ENCODE measurements at regions of chr5 and their contacts with region 1.

Region 1: DNA sequence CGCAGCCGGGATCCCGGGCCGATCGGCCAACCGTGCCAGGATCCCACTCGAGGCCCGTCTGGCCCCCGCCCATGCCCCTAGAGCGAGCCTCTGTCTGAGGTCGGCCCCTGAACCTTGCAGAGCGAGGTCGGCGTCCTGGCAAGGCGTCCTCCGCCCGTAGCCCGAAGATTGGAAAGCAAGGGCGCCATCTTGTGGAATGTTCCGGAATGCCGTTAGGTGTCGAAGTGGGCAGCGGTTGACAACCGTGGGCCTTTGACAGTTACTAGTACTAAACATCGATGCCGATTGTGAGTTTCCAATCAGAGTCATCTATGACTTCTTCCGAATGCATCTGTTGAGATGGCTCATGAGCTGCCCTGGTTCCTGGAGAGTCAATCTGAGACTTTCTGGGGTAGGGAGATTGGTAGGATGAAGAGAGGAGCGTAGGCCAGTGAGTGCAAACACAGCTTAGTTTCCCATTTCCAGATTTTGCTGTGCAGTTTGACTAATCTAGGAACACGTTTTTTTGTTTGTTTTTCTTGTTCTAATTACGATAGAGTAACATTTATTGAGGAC is 923 bp upstream of the PLK2 start:
- DNase-seq: peak; percentile 77
- ATAC-seq: peak; percentile 71
- H3K4me3 ChIP-seq: peak overlapping the region; percentile 82
- H3K27ac ChIP-seq: peak overlapping the region; percentile 92
- H3K4me1 ChIP-seq: peaks cover 8 to 45% of the 10 kb centered on the region in 2 experiments
- H3K27me3 ChIP-seq: no peaks in the 10 kb centered on the region
- CTCF ChIP-seq: peak; percentile 63 to 81 (median 77)
- POLR2A ChIP-seq: no peak
- RAD21 ChIP-seq: peak; percentile 91

Region 2: GRCh38 chr5:57383093-57383861 is 1077.5 kb before region 1 on chr5:
- CTCF ChIA-PET with region 1: no interaction called
- POLR2A ChIA-PET with region 1: no interaction called
- RAD21 ChIA-PET with region 1: no interaction called
- intact Hi-C with region 1: loop called (anchors 5 kb)
- DNase-seq: peak; percentile 92
- ATAC-seq: peak; percentile 96
- H3K4me3 ChIP-seq: peak overlapping the region in 1 of 2 experiments; percentile 17; a peak in 1 of 4 replicates
- H3K27ac ChIP-seq: peak overlapping the region; percentile 95
- H3K4me1 ChIP-seq: peaks cover 27 to 37% of the 10 kb centered on the region in 2 experiments
- H3K27me3 ChIP-seq: no peaks in the 10 kb centered on the region
- CTCF ChIP-seq: 0 out of 6 replicates have a peak, but pooled peaks of 1 of the 3 experiments have one; percentile 17
- POLR2A ChIP-seq: no peak
- RAD21 ChIP-seq: peak; percentile 50

Region 3: GRCh38 chr5:57499262-57500050 is 961.4 kb before region 1 on chr5:
- CTCF ChIA-PET with region 1: interaction called, 50 read pairs
- POLR2A ChIA-PET with region 1: interaction called, 5 read pairs
- RAD21 ChIA-PET with region 1: interaction called, 3 to 8 read pairs
- intact Hi-C with region 1: loop called (anchors 1 kb)
- DNase-seq: peak; percentile 62
- ATAC-seq: peak; percentile 33
- H3K4me3 ChIP-seq: no peak overlapping the region
- H3K27ac ChIP-seq: no peak overlapping the region
- H3K4me1 ChIP-seq: peaks cover 22 to 43% of the 10 kb centered on the region in 2 experiments
- H3K27me3 ChIP-seq: no peaks in the 10 kb centered on the region
- CTCF ChIP-seq: peak; percentile 61 to 85 (median 63); a peak in 5 of 6 replicates
- POLR2A ChIP-seq: no peak
- RAD21 ChIP-seq: peak; percentile 93

Region 4: DNA sequence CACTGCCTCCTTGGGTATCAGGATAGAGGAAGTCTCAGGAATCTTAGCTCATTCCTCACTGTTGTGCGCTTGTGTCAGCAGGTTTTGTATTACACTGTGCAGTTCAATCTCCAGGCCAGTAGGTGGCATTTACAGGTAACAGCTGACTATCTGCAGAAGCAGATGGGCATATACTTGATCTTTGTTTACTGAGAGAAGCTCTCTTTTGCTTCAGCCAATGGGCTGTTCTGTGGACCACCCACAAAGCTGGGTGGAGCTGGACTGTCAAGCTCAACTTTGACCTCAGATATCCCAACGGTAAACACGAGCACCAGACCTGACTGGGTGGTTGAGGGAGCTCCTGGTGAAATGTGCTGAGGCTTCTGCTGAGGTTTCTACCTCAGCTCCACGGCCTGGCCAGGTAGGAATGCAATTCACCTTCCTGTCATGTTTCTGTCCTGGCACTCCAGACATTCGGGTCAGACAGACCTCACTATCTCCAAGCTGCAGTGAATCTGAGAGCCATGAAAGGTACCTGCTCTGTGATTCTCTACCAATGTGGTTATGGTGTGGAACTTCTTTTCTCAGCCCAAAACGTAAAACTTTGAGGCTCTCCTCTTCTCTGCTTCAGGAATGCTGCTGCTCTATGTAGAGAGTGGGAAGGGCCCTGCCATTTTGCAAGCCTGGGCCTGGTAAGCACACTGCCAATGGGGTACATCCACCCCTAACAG is 810.3 kb before region 1 on chr5:
- CTCF ChIA-PET with region 1: interaction called, 7 read pairs
- POLR2A ChIA-PET with region 1: interaction called, 3 read pairs
- RAD21 ChIA-PET with region 1: interaction called in 1 of 2 experiments, 3 read pairs
- intact Hi-C with region 1: loop called (anchors 1 kb)
- DNase-seq: peak; percentile 57
- ATAC-seq: peak; percentile 97
- H3K4me3 ChIP-seq: no peak overlapping the region
- H3K27ac ChIP-seq: no peak overlapping the region
- H3K4me1 ChIP-seq: peaks cover 0 to 10% of the 10 kb centered on the region in 2 experiments; a peak in 2 of 4 replicates
- H3K27me3 ChIP-seq: no peaks in the 10 kb centered on the region
- CTCF ChIP-seq: peak; percentile 44 to 82 (median 81); a peak in 5 of 6 replicates
- POLR2A ChIP-seq: no peak
- RAD21 ChIP-seq: peak; percentile 80

Region 5: DNA sequence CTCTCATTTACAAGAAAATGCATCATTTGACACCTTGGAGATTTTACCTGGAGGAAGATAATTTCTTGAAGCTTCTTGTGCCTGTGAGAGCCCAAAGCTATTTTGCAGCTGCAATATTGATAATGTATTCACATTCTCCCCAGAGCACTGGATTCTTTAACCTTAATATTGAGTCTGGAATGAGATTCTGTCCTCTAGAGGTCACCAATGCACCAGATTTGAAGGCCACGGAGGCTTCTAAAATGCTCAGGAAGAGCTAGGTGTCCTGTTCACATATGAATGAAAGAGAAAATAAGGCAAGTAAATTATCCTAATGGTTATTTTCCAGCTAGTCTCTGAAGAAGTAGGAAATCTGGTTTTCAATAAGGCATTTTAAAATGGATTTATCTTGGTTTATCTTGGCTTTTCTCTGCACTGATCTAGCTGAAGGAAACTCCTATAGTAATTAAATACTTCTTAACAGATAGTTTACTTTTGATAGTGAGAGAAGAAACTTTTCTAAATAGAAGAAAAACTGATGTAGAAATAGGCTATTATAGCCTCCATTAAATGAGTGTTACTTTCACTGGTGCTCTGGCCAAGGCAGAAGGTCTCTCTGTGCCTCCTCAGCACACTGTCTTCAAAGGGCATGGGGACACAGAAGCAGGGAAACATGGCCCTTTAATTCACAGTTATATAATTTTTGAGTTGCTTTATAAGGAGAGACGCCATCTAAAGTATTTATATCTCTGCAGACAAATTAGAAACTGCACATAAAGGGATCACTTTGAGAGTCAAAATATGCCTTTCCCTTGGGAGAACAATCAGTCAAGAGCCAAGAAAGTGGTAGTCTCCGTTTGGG is 681.2 kb before region 1 on chr5:
- CTCF ChIA-PET with region 1: interaction called, 88 read pairs
- POLR2A ChIA-PET with region 1: interaction called, 13 read pairs
- RAD21 ChIA-PET with region 1: interaction called, 9 to 21 read pairs
- intact Hi-C with region 1: loop called (anchors 1 kb)
- DNase-seq: peak; percentile 63
- ATAC-seq: peak; percentile 94
- H3K4me3 ChIP-seq: no peak overlapping the region
- H3K27ac ChIP-seq: no peak overlapping the region
- H3K4me1 ChIP-seq: peaks cover 0 to 8% of the 10 kb centered on the region in 2 experiments; a peak in 1 of 4 replicates
- H3K27me3 ChIP-seq: no peaks in the 10 kb centered on the region
- CTCF ChIP-seq: peak; percentile 60 to 81 (median 78); a peak in 5 of 6 replicates
- POLR2A ChIP-seq: no peak
- RAD21 ChIP-seq: peak; percentile 92

Region 6: GRCh38 chr5:57887851-57888621 is 572.8 kb before region 1 on chr5:
- CTCF ChIA-PET with region 1: interaction called, 47 read pairs
- POLR2A ChIA-PET with region 1: interaction called, 19 read pairs
- RAD21 ChIA-PET with region 1: interaction called, 12 to 14 read pairs
- intact Hi-C with region 1: loop called (anchors 1 kb)
- DNase-seq: peak; percentile 61
- ATAC-seq: peak; percentile 88
- H3K4me3 ChIP-seq: no peak overlapping the region
- H3K27ac ChIP-seq: no peak overlapping the region
- H3K4me1 ChIP-seq: peaks cover 18 to 29% of the 10 kb centered on the region in 2 experiments
- H3K27me3 ChIP-seq: no peaks in the 10 kb centered on the region
- CTCF ChIP-seq: peak; percentile 59 to 75 (median 68); a peak in 5 of 6 replicates
- POLR2A ChIP-seq: no peak
- RAD21 ChIP-seq: peak; percentile 81